Gastrocnemius medialis (tissue), 4 donors: ENCODE measurements at regions of chr19 and their contacts with region 1.

Region 1: GRCh38 chr19:11558881-11559828 is at the start of gene ELOF1:
- DNase-seq: peak; percentile 97
- ATAC-seq: peak; percentile 97 to 99
- H3K4me3 ChIP-seq: peak within 1 kb of the TSS; percentile 71 to 98 (median 84)
- H3K27ac ChIP-seq: peak within 1 kb of the TSS; percentile 76 to 92 (median 86)
- H3K4me1 ChIP-seq: peaks cover 22 to 25% of the 10 kb centered on the region in 2 donors
- H3K27me3 ChIP-seq: no peaks in the 10 kb centered on the region
- CTCF ChIP-seq: peak in 2 of 5 experiments; percentile 10 to 22
- POLR2A ChIP-seq: peak; percentile 69 to 84
- total RNA-seq, gene ELOF1: 21.5 to 37.5 (median 27.2) TPM

Region 2: DNA sequence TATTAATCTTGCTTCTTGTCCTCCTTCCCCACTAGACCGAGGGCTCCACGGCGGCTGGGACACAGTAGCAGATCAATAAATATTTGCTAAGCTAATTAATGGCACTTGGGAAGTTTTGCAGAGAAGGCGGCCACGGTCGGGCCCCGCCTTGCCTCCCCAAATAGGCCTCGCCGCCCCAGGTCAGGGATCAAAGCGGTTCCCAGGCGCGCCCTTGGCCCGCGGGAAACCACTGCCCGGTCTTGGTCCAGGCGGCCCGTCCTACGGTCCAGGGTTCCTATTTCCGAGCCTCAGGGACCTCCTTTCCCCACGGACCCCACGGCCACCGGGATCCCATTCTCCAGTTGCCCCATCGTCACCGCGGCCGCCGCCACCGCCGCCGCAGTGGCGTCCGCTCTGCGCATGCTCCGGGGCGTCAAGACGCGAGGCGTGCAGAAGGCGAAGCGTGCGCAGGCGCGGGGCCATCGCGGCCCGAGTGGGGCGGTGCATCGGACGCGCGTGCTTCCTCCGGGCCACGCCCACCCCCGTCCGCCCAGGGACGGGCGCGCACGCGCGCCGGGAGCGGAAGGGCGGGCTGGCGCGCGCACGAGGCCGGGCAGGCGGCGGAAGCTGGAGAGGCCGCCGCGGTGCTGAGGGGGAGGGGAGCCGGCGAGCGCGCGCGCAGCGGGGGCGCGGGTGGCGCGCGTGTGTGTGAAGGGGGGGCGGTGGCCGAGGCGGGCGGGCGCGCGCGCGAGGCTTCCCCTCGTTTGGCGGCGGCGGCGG is 598.7 kb before region 1 on chr19 and contains the start of gene SMARCA4:
- in situ Hi-C with region 1: no loop called
- intact Hi-C with region 1: no loop called
- DNase-seq: peak; percentile 93 to 97
- ATAC-seq: peak; percentile 91 to 93
- H3K4me3 ChIP-seq: peak within 1 kb of the TSS; percentile 72 to 91 (median 86)
- H3K27ac ChIP-seq: peak within 1 kb of the TSS; percentile 88 to 99 (median 95)
- H3K4me1 ChIP-seq: peaks cover 23 to 24% of the 10 kb centered on the region in 2 donors
- H3K27me3 ChIP-seq: no peaks in the 10 kb centered on the region
- CTCF ChIP-seq: no peak
- POLR2A ChIP-seq: peak; percentile 96 to 97
- total RNA-seq, gene SMARCA4: 24.0 to 72.6 (median 68.7) TPM

Region 3: DNA sequence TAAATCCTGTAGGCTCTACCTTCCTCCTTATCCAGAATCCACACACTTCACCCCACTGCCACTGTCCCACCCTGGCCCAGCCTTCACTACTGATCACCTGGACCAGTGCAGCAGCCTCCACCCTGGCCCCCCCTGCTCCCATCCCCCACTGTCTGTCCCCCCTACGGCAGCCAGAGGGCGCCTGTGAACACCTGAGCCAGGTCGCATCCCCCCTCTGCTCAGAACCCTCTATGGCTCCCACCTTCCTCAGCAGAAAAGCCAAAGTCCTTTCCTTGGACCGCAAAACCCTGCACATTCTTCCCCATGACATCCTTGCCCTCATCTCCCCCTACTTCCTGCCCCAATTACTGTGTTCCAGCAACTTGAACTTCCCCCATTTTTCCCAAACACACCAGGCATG is 98.9 kb before region 1 on chr19:
- in situ Hi-C with region 1: no loop called
- intact Hi-C with region 1: no loop called
- DNase-seq: no peak
- ATAC-seq: no peak
- H3K4me3 ChIP-seq: no peak overlapping the region
- H3K27ac ChIP-seq: no peak overlapping the region
- H3K4me1 ChIP-seq: no peaks in the 10 kb centered on the region
- H3K27me3 ChIP-seq: peaks cover 7 to 12% (median 10%) of the 10 kb centered on the region in 3 donors
- CTCF ChIP-seq: no peak
- POLR2A ChIP-seq: no peak

Region 4: DNA sequence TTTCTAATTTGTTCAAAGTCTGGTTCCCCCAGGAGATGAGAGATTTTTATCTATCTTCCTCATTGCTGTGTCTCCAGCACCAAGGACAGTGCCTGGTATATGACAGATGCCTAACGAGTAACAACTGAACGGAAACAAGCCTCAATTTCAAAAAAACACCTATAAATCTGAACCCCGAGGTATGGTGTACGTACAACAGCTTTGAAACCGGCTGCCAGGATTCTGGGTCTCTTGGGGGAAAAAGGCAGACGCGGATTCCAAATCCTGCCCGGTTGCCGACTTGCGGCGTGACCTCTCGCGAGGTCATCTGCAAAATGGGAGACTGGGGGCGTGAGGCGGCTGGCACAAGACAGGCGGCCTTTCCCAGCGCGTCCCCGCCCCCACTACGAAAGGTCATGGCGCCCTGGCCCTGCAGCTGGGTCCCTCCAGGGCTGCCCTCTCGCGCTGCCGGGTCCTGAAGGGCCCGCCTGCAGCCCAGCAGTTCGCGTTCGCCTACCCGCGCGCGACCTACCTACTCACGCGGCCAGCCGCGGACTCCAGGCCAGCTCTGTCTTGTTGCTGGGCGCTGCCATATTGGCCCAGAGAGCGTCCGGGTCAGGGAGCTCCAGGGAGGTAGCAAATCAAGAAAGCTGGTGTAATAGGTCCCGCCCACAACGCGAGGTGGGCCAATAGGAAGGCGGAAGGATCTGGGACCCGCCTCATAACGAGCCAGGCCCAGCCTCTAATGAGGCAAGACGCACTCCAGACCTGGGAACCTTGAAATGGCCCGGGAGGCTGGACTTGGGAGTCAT is 30.4 kb before region 1 on chr19 and contains the start of gene ECSIT:
- in situ Hi-C with region 1: no loop called
- intact Hi-C with region 1: loop called (anchors 2 kb)
- DNase-seq: peak; percentile 96 to 99
- ATAC-seq: peak; percentile 99 to 100
- H3K4me3 ChIP-seq: peak within 1 kb of the TSS; percentile 77 to 92 (median 83)
- H3K27ac ChIP-seq: peak within 1 kb of the TSS; percentile 89 to 93 (median 92)
- H3K4me1 ChIP-seq: peaks cover 13 to 24% of the 10 kb centered on the region in 2 donors
- H3K27me3 ChIP-seq: no peaks in the 10 kb centered on the region
- CTCF ChIP-seq: no peak
- POLR2A ChIP-seq: peak in 1 of 2 donors; percentile 36
- total RNA-seq, gene ECSIT: 82.9 to 199 (median 129) TPM

Region 5: GRCh38 chr19:11535792-11536595 is 23.2 kb before region 1 on chr19:
- in situ Hi-C with region 1: no loop called
- intact Hi-C with region 1: loop called (anchors 2 kb)
- DNase-seq: peak; percentile 60 to 82
- ATAC-seq: peak; percentile 87 to 94
- H3K4me3 ChIP-seq: peak overlapping the region; percentile 45 to 60 (median 49)
- H3K27ac ChIP-seq: peak overlapping the region; percentile 74 to 84 (median 80)
- H3K4me1 ChIP-seq: peaks cover 0 to 3% of the 10 kb centered on the region in 2 donors
- H3K27me3 ChIP-seq: peaks cover 0 to 10% (median 7%) of the 10 kb centered on the region in 3 donors
- CTCF ChIP-seq: peak; percentile 75 to 91 (median 90)
- POLR2A ChIP-seq: peak; percentile 60 to 80

Region 6: DNA sequence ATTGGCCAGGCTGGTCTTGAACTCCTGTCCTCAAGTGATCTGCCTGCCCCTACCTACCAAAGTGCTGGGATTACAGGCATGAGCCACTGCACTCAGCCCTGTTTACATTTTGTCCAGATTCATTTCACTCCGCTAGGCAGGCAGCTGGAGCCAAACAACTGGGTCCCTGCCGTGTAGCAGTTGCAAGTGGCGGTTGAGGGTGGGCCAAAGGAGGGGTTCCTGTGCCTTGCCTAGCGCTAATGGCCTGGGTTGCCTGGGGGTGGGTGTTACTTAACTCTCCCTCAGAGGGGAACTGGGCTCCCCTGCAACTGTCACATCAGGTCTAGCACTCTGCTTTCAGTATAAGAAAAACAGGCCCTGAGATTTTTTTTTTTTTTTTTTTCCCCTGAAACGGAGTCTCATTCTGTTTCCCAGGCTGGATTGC is 10.9 kb after region 1 on chr19:
- in situ Hi-C with region 1: no loop called
- intact Hi-C with region 1: no loop called
- DNase-seq: no peak
- ATAC-seq: no peak
- H3K4me3 ChIP-seq: no peak overlapping the region
- H3K27ac ChIP-seq: no peak overlapping the region
- H3K4me1 ChIP-seq: no peaks in the 10 kb centered on the region
- H3K27me3 ChIP-seq: no peaks in the 10 kb centered on the region
- CTCF ChIP-seq: no peak
- POLR2A ChIP-seq: no peak

Region 7: GRCh38 chr19:11587302-11587974 is 28.3 kb after region 1 on chr19:
- in situ Hi-C with region 1: no loop called
- intact Hi-C with region 1: loop called (anchors 1 kb)
- DNase-seq: peak; percentile 41 to 56
- ATAC-seq: peak; percentile 54 to 68
- H3K4me3 ChIP-seq: no peak overlapping the region
- H3K27ac ChIP-seq: no peak overlapping the region
- H3K4me1 ChIP-seq: peaks cover 0 to 5% of the 10 kb centered on the region in 2 donors
- H3K27me3 ChIP-seq: no peaks in the 10 kb centered on the region
- CTCF ChIP-seq: peak; percentile 78 to 88 (median 83)
- POLR2A ChIP-seq: no peak

Region 8: GRCh38 chr19:11659612-11660011 is 100.5 kb after region 1 on chr19:
- in situ Hi-C with region 1: no loop called
- intact Hi-C with region 1: no loop called
- DNase-seq: no peak
- ATAC-seq: no peak
- H3K4me3 ChIP-seq: no peak overlapping the region
- H3K27ac ChIP-seq: no peak overlapping the region
- H3K4me1 ChIP-seq: no peaks in the 10 kb centered on the region
- H3K27me3 ChIP-seq: no peaks in the 10 kb centered on the region
- CTCF ChIP-seq: no peak
- POLR2A ChIP-seq: no peak